ENCODE measurements at regions of chr2 and their contacts with region 1.

Region 1: GRCh38 chr2:143034292-143035074 is 94.7 kb upstream of the ARHGAP15 start:
- DNase-seq: peak; percentile 40
- H3K4me3 ChIP-seq: no peak overlapping the region
- CTCF ChIP-seq: peak; percentile 61

Region 2: DNA sequence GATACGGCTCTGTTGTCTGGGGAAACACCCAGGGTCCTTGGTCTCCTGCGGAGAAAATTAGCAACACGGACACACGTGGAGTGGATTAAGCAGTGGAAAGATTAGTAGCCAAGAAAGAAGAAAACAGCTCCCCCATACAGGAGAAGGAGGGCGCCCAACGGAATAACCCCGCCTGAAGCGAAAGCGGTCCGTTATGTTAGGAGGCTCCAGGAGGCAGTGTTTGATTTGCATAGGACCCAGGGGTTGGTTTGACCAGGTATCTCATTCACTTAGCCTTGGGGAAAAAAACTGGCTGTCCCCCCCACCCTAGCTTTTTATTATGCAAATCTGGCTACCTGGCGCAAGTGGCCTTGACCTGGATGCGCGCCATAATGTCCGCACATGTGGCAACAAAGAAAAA is 327.2 kb before region 1 on chr2:
- CTCF ChIA-PET with region 1: no interaction called
- POLR2A ChIA-PET with region 1: no interaction called
- DNase-seq: no peak
- H3K4me3 ChIP-seq: no peak overlapping the region
- CTCF ChIP-seq: no peak

Region 3: DNA sequence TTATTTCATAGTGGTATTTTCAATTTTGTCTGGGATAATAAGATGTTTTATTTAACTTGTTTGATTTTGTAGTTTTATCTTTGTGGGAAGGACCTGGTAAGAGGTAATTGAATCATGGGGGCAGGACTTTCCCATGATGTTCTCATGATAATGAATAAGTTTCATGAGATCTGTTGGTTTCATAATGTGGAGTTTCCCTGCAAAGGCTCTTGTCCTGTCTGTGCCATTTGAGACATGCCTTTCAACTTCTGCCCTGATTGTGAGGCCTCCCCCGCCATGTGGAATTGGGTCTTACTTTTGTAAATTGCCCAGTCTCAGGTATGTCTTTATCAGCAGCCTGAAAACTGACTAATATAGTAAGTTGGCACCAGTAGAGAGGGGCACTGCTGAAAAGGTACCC is 17.0 kb after region 1 on chr2:
- CTCF ChIA-PET with region 1: interaction called, 17 read pairs
- POLR2A ChIA-PET with region 1: no interaction called
- DNase-seq: no peak
- H3K4me3 ChIP-seq: no peak overlapping the region
- CTCF ChIP-seq: no peak

Region 4: DNA sequence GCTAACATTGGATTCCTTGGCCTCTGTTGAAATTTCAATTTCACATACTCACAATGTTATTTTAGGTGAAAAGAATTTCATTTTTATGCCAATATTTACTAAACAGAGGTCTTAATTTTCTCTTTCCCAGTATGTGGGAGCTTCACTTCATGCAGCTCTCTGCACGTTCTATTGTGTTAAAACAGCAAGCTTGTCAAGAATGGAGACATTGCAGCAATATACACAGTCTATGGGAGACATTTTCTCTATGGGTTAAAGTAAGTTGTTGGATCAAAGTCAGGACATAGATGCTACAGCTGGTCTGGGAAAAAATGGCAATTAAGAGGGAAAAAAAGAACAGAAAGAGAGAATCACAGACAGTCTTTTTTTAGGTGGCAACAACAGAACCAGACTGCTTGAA is 24.4 kb after region 1 on chr2:
- CTCF ChIA-PET with region 1: interaction called, 10 read pairs
- POLR2A ChIA-PET with region 1: no interaction called
- DNase-seq: no peak
- H3K4me3 ChIP-seq: no peak overlapping the region
- CTCF ChIP-seq: no peak